ENCODE measurements at regions of chr6 and their contacts with region 1.

Region 1: GRCh38 chr6:113596387-113597230 is 260.5 kb upstream of the MARCKS start:
- DNase-seq: no peak
- ATAC-seq: peak; percentile 10
- H3K4me3 ChIP-seq: no peak overlapping the region
- H3K27ac ChIP-seq: no peak overlapping the region
- H3K4me1 ChIP-seq: no peaks in the 10 kb centered on the region
- H3K27me3 ChIP-seq: no peaks in the 10 kb centered on the region
- CTCF ChIP-seq: no peak
- EP300 ChIP-seq: no peak
- POLR2A ChIP-seq: no peak
- RAD21 ChIP-seq: no peak

Region 2: GRCh38 chr6:113586413-113587077 is 10.1 kb before region 1 on chr6:
- CTCF ChIA-PET with region 1: no interaction called
- POLR2A ChIA-PET with region 1: no interaction called
- RAD21 ChIA-PET with region 1: no interaction called
- SMC1A ChIA-PET with region 1: interaction called, 12 read pairs
- in situ Hi-C with region 1: no loop called
- intact Hi-C with region 1: no loop called
- DNase-seq: no peak
- ATAC-seq: no peak
- H3K4me3 ChIP-seq: no peak overlapping the region
- H3K27ac ChIP-seq: no peak overlapping the region
- H3K4me1 ChIP-seq: no peaks in the 10 kb centered on the region
- H3K27me3 ChIP-seq: no peaks in the 10 kb centered on the region
- CTCF ChIP-seq: no peak
- EP300 ChIP-seq: no peak
- POLR2A ChIP-seq: no peak
- RAD21 ChIP-seq: no peak

Region 3: GRCh38 chr6:113620386-113620785 is 23.8 kb after region 1 on chr6:
- CTCF ChIA-PET with region 1: interaction called, 3 read pairs
- POLR2A ChIA-PET with region 1: interaction called, 3 read pairs
- RAD21 ChIA-PET with region 1: interaction called, 8 read pairs
- SMC1A ChIA-PET with region 1: interaction called, 11 read pairs
- in situ Hi-C with region 1: no loop called
- intact Hi-C with region 1: no loop called
- DNase-seq: no peak
- ATAC-seq: no peak
- H3K4me3 ChIP-seq: no peak overlapping the region
- H3K27ac ChIP-seq: no peak overlapping the region
- H3K4me1 ChIP-seq: peaks cover 25% of the 10 kb centered on the region
- H3K27me3 ChIP-seq: no peaks in the 10 kb centered on the region
- CTCF ChIP-seq: no peak
- EP300 ChIP-seq: no peak
- POLR2A ChIP-seq: no peak
- RAD21 ChIP-seq: no peak

Region 4: DNA sequence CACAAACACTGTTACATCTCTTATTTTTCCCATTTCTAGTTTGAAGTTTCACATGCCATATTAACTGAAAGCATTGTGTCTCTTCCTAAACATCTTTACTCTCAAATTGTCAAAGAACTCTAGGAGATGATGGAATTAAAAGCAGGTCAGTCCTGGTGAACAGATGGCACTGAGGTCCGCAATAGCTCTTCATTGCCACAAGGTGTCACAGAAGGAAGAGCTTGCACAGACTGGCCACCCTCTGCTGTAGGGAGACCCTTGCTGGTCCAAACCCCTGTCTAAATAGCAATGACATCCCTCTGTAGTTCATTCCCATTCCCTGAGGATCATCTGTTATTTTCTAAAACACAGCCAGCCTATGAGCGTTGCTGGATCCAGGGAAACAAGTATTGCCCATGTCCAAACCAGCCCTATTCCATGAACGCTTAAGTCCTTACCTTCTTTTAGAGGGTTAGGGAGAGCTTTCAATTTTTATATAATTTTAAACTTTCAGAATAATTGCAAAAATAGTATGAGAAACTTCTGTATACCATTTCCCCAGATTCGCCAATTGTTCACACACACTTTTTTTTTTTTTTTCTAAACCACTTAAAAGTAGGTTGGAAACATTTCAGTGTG is 384.4 kb after region 1 on chr6:
- CTCF ChIA-PET with region 1: no interaction called
- POLR2A ChIA-PET with region 1: no interaction called
- RAD21 ChIA-PET with region 1: no interaction called
- SMC1A ChIA-PET with region 1: no interaction called
- in situ Hi-C with region 1: no loop called
- intact Hi-C with region 1: no loop called
- DNase-seq: no peak
- ATAC-seq: peak; percentile 92
- H3K4me3 ChIP-seq: no peak overlapping the region
- H3K27ac ChIP-seq: no peak overlapping the region
- H3K4me1 ChIP-seq: no peaks in the 10 kb centered on the region
- H3K27me3 ChIP-seq: no peaks in the 10 kb centered on the region
- CTCF ChIP-seq: peak; percentile 25 to 57 (median 45); a peak in 5 of 6 replicates
- EP300 ChIP-seq: no peak
- POLR2A ChIP-seq: no peak
- RAD21 ChIP-seq: 0 out of 2 replicates have a peak, but pooled peaks have one; percentile 15

Measured in GM12878 (cell line).